ENCODE measurements at regions of chr16 and their contacts with region 1.

Region 1: GRCh38 chr16:28950648-28951409 is at the start of gene NFATC2IP:
- DNase-seq: peak; percentile 97

Region 2: GRCh38 chr16:28823872-28824716 is 126.7 kb before region 1 on chr16:
- CTCF ChIA-PET with region 1: no interaction called
- POLR2A ChIA-PET with region 1: interaction called, 12 read pairs
- DNase-seq: peak; percentile 93

Region 3: DNA sequence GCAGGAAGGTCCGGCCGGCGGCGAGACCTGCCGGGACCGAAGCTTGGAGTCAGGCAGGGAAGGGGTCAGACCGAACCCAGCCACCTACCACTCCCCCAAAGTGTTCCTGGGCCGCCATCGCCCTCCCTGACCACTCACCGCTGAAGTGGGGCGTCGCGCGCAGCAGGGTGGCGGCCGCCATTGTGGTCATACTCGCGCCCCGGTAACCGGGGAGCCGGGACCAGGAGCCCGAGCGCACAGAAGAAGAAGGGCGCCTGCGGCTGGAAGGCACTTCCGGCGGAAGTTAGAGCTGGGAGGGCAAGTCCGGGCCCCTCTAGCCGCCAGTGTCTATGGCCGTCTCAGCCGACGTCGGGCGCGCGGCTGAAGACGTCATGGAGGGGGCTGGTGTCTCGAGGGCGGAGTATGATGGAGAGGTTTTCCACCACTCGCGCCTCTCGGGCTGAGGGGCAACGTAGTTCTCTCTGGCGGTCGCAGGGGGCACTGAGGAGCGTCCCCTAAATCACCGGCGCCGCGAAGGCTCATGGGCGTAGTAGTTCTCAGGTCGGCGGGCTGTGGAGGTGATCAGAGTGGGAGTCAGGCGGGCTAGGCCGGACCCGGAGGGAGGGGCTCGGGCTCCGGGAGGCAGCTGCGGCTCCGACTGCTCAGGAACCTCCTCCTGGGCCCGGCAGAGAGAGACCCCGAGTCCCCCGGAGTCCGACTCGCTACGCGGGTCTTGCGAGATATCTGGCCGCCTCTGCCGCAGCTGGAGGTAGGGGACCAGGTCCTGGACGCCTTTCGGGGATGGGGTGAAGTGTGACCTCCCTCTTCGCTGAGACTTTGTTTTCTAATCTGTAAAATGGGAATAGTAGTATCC is 104.5 kb before region 1 on chr16 and contains the start of gene TUFM:
- CTCF ChIA-PET with region 1: no interaction called
- POLR2A ChIA-PET with region 1: interaction called, 17 read pairs
- DNase-seq: peak; percentile 96

Region 4: DNA sequence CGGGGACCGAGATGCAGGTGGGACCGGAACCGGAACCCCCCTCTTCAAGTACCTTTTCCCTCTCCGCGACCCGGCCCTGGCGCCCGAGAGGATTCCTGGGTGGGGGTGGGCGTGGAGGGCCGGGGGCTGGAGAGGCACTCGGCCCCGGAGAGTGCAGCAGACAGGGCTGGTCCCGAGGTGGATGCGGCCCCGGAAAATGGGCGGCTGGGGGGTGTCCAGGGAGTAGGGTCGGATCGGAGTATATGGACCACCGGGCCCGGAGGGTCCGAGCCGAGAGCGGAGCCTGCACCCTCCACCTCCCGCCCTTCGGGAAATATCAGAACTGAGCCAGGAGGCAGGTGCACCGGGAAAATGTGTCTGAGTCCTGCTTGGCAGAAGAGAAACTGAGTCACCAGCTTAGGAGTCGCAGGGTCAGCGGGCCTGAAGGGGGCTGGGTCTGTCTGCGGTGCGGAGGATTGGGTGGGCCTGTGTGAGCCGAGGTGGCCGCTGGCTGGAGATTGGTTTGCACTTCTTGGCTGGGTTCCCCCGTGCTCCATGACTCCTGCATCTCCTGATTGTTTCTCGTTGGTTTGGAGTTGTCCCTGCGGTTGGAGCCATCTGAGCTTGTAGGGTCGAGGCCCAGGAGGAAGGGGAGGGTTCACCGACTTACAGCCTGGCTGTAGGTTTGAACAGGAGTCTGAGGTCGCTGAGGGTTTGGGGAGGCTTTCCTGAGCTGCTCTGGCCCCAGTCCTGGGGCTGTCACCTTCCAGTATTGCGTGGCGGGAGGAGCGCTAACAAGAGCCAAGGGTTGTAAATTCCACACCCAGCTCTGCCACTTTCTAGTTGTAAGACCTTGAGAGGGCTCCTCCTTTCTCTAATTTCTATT is 86.7 kb before region 1 on chr16:
- CTCF ChIA-PET with region 1: no interaction called
- POLR2A ChIA-PET with region 1: interaction called, 18 read pairs
- DNase-seq: no peak

Region 5: DNA sequence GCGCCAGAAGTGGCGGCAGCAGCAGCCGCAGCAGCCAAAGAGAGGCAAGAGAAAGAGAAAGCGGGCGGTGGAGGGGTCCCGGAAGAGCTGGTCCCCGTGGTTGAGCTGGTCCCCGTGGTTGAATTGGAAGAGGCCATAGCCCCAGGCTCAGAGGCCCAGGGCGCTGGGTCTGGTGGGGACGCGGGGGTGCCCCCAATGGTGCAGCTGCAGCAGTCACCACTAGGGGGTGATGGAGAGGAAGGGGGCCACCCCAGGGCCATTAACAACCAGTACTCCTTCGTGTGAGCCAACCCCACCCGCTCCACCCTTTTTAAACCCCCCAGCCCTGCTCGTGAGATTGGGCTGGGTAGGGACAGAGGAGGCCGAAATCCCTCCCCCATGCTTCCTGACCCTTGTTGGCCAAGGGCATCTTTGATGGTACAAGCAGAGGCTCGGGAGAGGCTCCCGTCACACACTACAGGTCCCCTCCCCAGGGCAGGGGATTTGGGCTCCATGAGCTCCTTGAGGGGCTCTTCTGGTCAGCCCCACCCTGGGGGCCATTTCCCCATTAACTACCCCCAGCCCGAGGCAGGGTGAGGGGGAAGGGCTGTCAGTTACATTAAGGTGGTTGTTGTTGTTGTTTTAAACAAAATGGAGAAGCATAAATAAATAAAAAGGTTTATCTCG is 77.2 kb before region 1 on chr16:
- CTCF ChIA-PET with region 1: no interaction called
- POLR2A ChIA-PET with region 1: interaction called, 11 read pairs
- DNase-seq: peak; percentile 64

Region 6: GRCh38 chr16:28935924-28936783 is 14.7 kb before region 1 on chr16:
- CTCF ChIA-PET with region 1: interaction called, 3 read pairs
- POLR2A ChIA-PET with region 1: interaction called, 12 read pairs
- DNase-seq: peak; percentile 98

Region 7: DNA sequence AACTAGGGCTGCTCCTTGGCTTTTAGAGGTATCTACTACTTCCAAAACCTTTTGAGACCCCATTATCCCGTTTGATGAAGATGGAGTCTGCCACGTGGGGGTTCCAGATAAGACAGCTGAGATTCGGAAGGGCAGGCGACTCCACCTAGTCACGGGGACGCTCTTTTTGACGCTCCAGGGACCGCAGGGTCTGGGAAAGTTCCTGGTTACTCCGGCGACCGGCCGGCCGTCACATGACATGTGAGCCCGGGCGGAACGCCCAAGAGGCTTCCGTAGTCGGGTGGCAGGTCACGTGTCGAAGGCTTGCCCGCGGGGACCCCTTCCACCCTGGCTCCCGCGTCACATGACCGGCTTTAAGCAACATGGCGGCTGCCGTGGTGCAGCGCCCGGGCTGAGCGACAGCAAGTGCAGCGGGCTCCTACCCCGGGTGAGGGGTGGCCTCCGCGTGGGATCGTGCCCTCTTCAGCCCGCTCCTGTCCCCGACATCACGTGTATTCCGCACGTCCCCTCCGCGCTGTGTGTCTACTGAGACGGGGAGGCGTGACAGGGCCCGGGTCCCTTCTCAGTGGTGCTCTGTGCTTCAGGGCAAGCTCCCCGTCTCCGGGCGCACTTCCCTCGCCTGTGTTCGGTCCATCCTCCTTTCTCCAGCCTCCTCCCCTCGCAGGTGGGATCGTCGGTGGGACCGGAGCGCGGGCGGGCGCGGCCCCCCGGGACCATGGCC is 23.8 kb after region 1 on chr16 and contains the start of gene SPNS1:
- CTCF ChIA-PET with region 1: interaction called, 8 read pairs
- POLR2A ChIA-PET with region 1: interaction called, 19 read pairs
- DNase-seq: peak; percentile 98